CD14-positive monocyte (primary cell): ENCODE measurements at regions of chr16 and their contacts with region 1.

Region 1: DNA sequence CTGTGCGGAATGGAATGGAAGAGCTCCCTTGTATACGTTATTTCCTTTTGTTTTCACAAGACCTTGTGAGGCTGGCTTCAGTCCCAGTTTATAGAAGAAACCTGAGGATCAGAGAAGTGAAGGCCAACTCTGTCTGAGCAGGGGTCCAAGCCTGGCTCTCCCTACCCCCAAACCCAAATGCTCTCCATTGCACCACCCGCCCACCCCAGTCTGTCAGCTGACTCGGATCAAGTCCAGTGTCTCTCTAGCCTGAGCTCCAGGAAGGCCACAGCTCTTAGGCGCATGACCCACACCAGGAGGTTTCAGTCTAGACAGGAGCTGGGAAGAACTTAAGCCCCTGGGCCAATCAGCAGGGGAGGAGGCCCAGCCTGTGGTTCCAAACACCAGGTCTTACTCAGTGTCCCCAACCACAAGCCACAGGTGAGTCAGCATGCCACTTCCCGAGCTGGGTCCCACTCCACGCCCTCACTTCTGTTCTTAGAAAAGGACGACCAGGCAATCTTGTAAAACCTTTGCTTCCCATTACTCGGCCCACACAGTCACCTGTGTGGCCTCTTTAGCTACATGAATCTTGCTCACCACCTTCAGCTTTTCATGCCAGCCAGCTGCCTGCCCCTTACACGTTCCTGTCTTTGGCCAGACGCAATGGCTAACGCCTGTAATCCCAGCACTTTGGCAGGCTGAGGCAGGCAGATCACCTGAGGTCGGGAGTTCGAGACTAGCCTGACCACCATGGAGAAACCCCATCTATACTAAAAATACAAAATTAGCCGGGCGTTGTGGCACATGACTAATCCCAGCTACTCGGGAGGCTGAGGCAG is 27.8 kb downstream of the TK2 start:
- DNase-seq: peak; percentile 84 to 96 (median 95)
- H3K4me3 ChIP-seq: peak overlapping the region in 1 of 3 experiments; percentile 54
- H3K4me3 Mint-ChIP-seq: peak overlapping the region; percentile 9 to 21
- H3K27ac ChIP-seq: peak overlapping the region; percentile 99
- H3K27ac Mint-ChIP-seq: peak overlapping the region; percentile 99 to 100 (median 100)
- H3K4me1 ChIP-seq: peaks cover 100% of the 10 kb centered on the region in 2 donors
- H3K4me1 Mint-ChIP-seq: peaks cover 100% of the 10 kb centered on the region
- H3K27me3 ChIP-seq: no peaks in the 10 kb centered on the region
- H3K27me3 Mint-ChIP-seq: peaks cover 0 to 2% (median 2%) of the 10 kb centered on the region in 3 donors
- CTCF ChIP-seq: no peak

Region 2: DNA sequence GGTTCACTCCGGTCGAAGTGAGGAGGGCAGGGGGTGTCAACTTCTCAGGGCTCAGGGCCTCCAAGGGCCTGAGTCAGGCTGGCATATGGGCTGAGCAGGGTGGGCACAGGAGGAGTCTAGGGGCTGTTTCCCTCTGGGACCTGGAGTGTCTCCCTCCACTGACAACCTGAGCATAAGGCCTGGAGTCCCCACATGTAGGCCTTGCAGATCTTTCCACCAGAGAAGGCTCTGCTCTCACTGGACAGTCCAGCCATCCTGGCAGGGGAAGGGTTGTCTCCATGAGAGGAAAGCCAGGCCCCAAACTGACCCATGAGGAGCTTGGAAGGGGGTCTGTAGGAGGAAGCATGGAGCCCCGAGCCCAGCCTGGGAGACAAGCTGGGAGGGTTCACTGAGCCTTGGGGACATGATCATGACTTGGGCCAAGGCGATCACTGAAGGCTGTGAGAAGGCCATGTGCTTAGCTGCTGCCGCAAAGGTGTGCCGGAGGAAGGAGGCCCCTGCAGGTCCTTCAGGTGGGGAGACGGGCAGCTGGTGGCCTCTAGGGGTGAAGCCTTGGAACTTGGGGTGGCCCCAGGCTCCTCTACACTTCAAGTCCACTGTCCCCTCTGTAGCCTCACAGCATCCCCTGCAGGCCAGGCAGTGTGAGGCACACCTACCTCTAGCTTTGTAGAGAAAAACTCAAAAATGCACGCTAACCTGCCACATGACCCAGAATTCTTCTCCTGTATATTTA is 67.0 kb after region 1 on chr16:
- intact Hi-C with region 1: loop called in 1 of 2 experiments (anchors 2 kb)
- DNase-seq: peak; percentile 68 to 83 (median 77)
- H3K4me3 ChIP-seq: no peak overlapping the region
- H3K4me3 Mint-ChIP-seq: peak overlapping the region in 1 of 2 donors; percentile 61
- H3K27ac ChIP-seq: peak overlapping the region in 1 of 2 donors; percentile 40
- H3K27ac Mint-ChIP-seq: peak overlapping the region in 3 of 7 donors; percentile 44 to 64 (median 46)
- H3K4me1 ChIP-seq: peaks cover 67 to 73% of the 10 kb centered on the region in 2 donors
- H3K4me1 Mint-ChIP-seq: peaks cover 68% of the 10 kb centered on the region
- H3K27me3 ChIP-seq: no peaks in the 10 kb centered on the region
- H3K27me3 Mint-ChIP-seq: peaks cover 0 to 6% (median 3%) of the 10 kb centered on the region in 3 donors
- CTCF ChIP-seq: peak; percentile 97